ENCODE measurements at regions of chr17 and their contacts with region 1.

Region 1: GRCh38 chr17:81484195-81484979 is 28.2 kb downstream of the ACTG1 start:
- DNase-seq: peak in 1 of 2 experiments; percentile 90
- H3K4me3 ChIP-seq: peak overlapping the region; percentile 37; the same call in 1 of the 2 replicates
- H3K27ac ChIP-seq: no peak overlapping the region
- H3K4me1 ChIP-seq: no peaks in the 10 kb centered on the region
- H3K27me3 ChIP-seq: no peaks in the 10 kb centered on the region
- CTCF ChIP-seq: peak; percentile 82

Region 2: GRCh38 chr17:80981062-80981902 is 503.1 kb before region 1 on chr17:
- CTCF ChIA-PET with region 1: no interaction called
- POLR2A ChIA-PET with region 1: no interaction called
- intact Hi-C with region 1: loop called (anchors 5 kb)
- DNase-seq: no peak
- H3K4me3 ChIP-seq: no peak overlapping the region
- H3K27ac ChIP-seq: no peak overlapping the region
- H3K4me1 ChIP-seq: no peaks in the 10 kb centered on the region
- H3K27me3 ChIP-seq: no peaks in the 10 kb centered on the region
- CTCF ChIP-seq: peak; percentile 71

Region 3: DNA sequence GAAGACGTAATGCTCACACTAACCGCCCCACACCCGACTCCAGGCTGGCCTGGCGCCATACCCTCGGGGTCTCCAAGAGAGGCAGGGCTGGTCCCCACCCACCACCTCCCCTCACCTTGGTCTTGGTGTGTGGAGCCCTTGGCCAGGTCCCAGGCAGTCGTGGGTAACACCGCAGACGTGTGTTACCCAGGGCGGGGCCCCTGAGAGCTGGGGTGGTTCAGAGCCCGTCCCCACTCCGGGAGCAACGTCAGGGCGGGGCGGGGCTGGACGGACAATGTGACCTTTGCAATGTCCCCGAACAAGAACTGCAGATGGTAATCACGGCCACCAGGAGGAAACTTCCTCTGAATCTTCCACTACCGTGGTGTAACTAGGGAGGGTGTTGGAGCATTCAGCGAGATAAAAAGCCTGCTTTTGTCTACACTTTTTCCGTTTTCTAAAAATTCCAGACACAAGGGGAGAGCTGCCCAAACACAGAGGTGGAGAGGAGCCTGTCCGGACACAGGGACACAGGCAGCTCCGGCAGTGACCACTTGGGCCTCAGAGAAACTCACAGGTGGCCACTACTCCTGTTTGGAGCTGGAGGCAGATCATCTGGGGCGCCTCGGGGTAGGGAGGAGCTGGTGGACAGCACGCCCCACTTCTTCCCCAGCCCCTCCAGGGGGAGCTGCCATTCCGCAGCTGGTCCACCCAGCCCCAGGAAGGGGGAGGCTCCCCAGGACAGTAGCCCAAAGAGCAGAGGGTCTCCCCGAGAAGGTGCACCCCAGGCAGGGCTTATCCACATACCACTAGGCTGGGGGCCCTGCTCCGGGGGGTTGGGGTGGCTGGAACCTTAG is 175.1 kb before region 1 on chr17:
- CTCF ChIA-PET with region 1: interaction called, 3 read pairs
- POLR2A ChIA-PET with region 1: no interaction called
- intact Hi-C with region 1: loop called (anchors 1 kb)
- DNase-seq: peak; percentile 76 to 92
- H3K4me3 ChIP-seq: peak overlapping the region; percentile 39; the same call in 1 of the 2 replicates
- H3K27ac ChIP-seq: peak overlapping the region; percentile 38; the same call in 1 of the 2 replicates
- H3K4me1 ChIP-seq: peaks cover 11% of the 10 kb centered on the region
- H3K27me3 ChIP-seq: no peaks in the 10 kb centered on the region
- CTCF ChIP-seq: peak; percentile 66

Region 4: GRCh38 chr17:81419328-81419885 is 65.0 kb before region 1 on chr17:
- CTCF ChIA-PET with region 1: no interaction called
- POLR2A ChIA-PET with region 1: interaction called, 7 read pairs
- intact Hi-C with region 1: loop called (anchors 5 kb)
- DNase-seq: peak; percentile 48 to 94
- H3K4me3 ChIP-seq: peak overlapping the region; percentile 40; the same call in 1 of the 2 replicates
- H3K27ac ChIP-seq: peak overlapping the region; percentile 63
- H3K4me1 ChIP-seq: peaks cover 36% of the 10 kb centered on the region
- H3K27me3 ChIP-seq: no peaks in the 10 kb centered on the region
- CTCF ChIP-seq: no peak

Region 5: GRCh38 chr17:81498953-81499600 is 14.7 kb after region 1 on chr17:
- CTCF ChIA-PET with region 1: interaction called, 3 read pairs
- POLR2A ChIA-PET with region 1: interaction called, 13 read pairs
- intact Hi-C with region 1: no loop called
- DNase-seq: no peak
- H3K4me3 ChIP-seq: no peak overlapping the region
- H3K27ac ChIP-seq: no peak overlapping the region
- H3K4me1 ChIP-seq: no peaks in the 10 kb centered on the region
- H3K27me3 ChIP-seq: no peaks in the 10 kb centered on the region
- CTCF ChIP-seq: no peak

Region 6: GRCh38 chr17:81536299-81537290 is 52.2 kb after region 1 on chr17:
- CTCF ChIA-PET with region 1: no interaction called
- POLR2A ChIA-PET with region 1: no interaction called
- intact Hi-C with region 1: no loop called
- DNase-seq: no peak
- H3K4me3 ChIP-seq: no peak overlapping the region
- H3K27ac ChIP-seq: no peak overlapping the region
- H3K4me1 ChIP-seq: no peaks in the 10 kb centered on the region
- H3K27me3 ChIP-seq: no peaks in the 10 kb centered on the region
- CTCF ChIP-seq: no peak